AG04450 (cell line): ENCODE measurements at regions of chr11 and their contacts with region 1.

Region 1: DNA sequence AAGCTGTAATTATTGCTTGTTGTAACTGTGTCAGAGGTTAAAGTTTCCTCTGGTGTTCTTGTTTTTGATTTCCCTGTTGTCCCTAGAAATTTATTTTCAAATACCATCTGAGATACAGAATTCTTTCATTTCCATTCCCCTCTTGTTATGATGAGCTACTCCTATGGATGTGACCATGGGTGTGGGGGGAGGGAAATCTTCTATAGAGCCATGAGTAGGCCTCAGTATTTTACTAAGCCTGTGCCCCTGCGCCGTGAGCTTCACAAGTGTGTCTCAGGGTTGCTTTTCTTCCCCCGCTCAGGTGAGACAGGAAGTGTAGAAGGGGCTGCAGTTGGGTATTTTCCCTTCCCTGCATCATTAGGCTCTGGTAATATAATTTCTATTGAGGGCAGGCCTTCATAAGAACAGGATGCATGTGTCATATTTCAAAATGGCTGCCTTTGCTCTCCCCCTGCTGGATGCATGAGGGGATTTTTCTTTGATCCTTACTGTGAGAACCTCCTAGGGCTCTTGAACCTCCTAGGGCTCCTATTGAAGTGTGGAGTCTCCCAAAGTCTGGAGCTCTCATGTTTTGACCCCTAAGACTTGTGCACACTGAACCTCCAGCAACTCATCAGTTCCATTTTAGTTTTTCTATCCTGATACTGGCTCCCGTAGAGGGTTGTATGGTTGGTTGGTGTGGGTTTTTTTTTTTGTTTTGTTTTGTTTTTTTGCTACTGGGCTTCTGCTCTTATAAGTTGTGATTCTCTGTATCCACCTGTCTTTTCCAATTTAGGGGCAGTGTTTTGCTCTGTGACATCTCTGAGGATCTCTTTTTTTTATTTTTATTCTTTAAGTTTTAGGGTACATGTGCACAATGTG is 658.2 kb downstream of the NTM start:
- DNase-seq: no peak
- H3K4me3 ChIP-seq: no peak overlapping the region
- H3K27ac ChIP-seq: no peak overlapping the region
- H3K27me3 ChIP-seq: no peaks in the 10 kb centered on the region
- CTCF ChIP-seq: peak; percentile 75

Region 2: GRCh38 chr11:131910523-131911387 is 117.9 kb before region 1 on chr11:
- CTCF ChIA-PET with region 1: interaction called, 13 read pairs
- POLR2A ChIA-PET with region 1: no interaction called
- DNase-seq: no peak
- H3K4me3 ChIP-seq: peak overlapping the region; percentile 88
- H3K27ac ChIP-seq: peak overlapping the region; percentile 25
- H3K27me3 ChIP-seq: no peaks in the 10 kb centered on the region
- CTCF ChIP-seq: no peak; the same call in 1 of the 2 replicates

Region 3: DNA sequence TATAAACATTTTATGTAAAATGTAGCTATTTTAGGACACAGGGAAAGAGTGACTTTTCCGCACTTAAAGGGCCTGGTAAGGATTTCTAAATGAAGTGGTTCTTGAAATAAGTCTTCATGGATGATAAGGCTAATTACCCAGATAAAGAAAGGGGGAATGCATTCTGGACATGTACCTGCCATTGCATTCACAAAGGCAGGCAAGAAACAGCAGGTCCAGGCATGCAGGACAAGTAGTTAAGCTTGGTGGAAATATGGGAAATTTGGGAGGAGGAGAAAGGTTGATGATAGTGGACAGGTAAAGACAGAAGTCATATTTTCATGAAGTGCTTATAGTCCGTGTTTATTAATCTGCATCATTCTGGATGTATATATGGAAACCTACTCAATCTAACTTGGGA is 37.0 kb before region 1 on chr11:
- CTCF ChIA-PET with region 1: interaction called, 12 read pairs
- POLR2A ChIA-PET with region 1: no interaction called
- DNase-seq: no peak
- H3K4me3 ChIP-seq: no peak overlapping the region
- H3K27ac ChIP-seq: no peak overlapping the region
- H3K27me3 ChIP-seq: no peaks in the 10 kb centered on the region
- CTCF ChIP-seq: no peak

Region 4: GRCh38 chr11:132008872-132009271 is 19.7 kb before region 1 on chr11:
- CTCF ChIA-PET with region 1: interaction called, 16 read pairs
- POLR2A ChIA-PET with region 1: no interaction called
- DNase-seq: no peak
- H3K4me3 ChIP-seq: no peak overlapping the region
- H3K27ac ChIP-seq: no peak overlapping the region
- H3K27me3 ChIP-seq: no peaks in the 10 kb centered on the region
- CTCF ChIP-seq: no peak

Region 5: DNA sequence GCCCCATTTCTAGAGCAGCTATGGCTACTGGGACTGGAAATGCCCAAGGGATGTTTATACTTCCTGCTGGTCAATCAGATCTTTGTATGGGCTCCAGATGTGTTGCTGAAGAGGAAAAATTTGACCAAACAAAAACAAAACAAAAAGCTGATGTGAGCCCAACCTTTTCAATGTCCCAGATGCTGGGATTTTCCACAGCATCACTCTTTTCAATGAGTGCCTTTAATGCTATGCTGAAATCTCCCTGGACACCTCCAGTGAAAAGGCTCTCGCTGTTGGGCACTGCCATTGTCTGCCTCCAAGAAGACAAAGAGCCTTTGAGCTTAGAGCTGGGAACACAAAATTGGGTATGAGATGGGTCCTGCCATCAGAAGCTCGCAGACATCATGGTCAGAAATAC is 13.7 kb after region 1 on chr11:
- CTCF ChIA-PET with region 1: interaction called, 13 read pairs
- POLR2A ChIA-PET with region 1: no interaction called
- DNase-seq: no peak
- H3K4me3 ChIP-seq: no peak overlapping the region
- H3K27ac ChIP-seq: no peak overlapping the region
- H3K27me3 ChIP-seq: no peaks in the 10 kb centered on the region
- CTCF ChIP-seq: no peak